Psoas muscle (tissue), 8 donors: ENCODE measurements at regions of chr3 and their contacts with region 1.

Region 1: GRCh38 chr3:151015767-151016477 is 43.4 kb upstream of the CLRN1 start:
- DNase-seq: no peak
- ATAC-seq: no peak
- H3K4me3 ChIP-seq: no peak overlapping the region
- H3K27ac ChIP-seq: no peak overlapping the region
- H3K4me1 ChIP-seq: no peaks in the 10 kb centered on the region
- H3K27me3 ChIP-seq: no peaks in the 10 kb centered on the region
- CTCF ChIP-seq: no peak

Region 2: DNA sequence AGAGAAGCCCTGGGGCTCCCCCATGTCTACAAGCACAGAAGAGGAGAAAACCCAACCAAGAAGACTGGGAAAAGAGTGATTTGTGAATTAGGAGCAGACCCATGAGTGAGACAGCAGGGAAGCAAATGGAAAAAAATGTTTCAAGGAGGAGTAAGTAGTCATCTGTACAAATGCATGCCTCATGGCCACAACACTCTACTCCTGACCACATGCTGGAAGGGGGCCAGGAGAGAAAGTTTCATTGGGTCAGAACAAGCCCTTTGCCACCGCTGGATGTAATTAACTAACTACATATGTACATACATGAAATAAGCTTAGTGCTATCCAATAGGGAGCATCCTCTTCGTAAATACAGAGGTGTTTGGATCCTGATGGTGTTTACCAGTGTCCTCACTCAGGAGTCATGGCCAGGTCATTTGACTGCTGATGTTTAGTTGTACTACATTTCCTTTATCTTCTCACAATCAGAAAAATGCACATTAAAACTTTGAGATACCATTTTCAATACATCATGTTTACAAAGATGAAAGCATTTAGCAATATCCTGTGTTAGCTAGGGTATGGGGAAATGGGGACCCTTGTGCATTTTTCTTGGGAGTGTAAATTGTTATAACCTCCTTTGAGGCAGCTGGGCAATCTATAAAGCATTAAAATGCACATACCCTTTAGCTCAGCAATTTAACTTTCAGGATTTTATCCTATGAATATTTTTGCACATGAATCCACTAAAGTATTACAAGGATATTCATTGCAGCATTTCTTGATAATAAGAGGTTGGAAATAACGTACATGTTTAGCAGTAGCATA is 70.5 kb before region 1 on chr3:
- intact Hi-C with region 1: loop called in 1 of 2 experiments (anchors 2 kb)
- DNase-seq: no peak
- ATAC-seq: no peak
- H3K4me3 ChIP-seq: no peak overlapping the region
- H3K27ac ChIP-seq: no peak overlapping the region
- H3K4me1 ChIP-seq: no peaks in the 10 kb centered on the region
- H3K27me3 ChIP-seq: no peaks in the 10 kb centered on the region
- CTCF ChIP-seq: no peak

Region 3: GRCh38 chr3:150960708-150961684 is 54.9 kb before region 1 on chr3:
- intact Hi-C with region 1: no loop called
- DNase-seq: no peak
- ATAC-seq: no peak
- H3K4me3 ChIP-seq: no peak overlapping the region
- H3K27ac ChIP-seq: no peak overlapping the region
- H3K4me1 ChIP-seq: no peaks in the 10 kb centered on the region
- H3K27me3 ChIP-seq: peaks cover 0 to 6% (median 3%) of the 10 kb centered on the region in 3 donors
- CTCF ChIP-seq: no peak